ENCODE measurements at regions of chr2 and their contacts with region 1.

Region 1: DNA sequence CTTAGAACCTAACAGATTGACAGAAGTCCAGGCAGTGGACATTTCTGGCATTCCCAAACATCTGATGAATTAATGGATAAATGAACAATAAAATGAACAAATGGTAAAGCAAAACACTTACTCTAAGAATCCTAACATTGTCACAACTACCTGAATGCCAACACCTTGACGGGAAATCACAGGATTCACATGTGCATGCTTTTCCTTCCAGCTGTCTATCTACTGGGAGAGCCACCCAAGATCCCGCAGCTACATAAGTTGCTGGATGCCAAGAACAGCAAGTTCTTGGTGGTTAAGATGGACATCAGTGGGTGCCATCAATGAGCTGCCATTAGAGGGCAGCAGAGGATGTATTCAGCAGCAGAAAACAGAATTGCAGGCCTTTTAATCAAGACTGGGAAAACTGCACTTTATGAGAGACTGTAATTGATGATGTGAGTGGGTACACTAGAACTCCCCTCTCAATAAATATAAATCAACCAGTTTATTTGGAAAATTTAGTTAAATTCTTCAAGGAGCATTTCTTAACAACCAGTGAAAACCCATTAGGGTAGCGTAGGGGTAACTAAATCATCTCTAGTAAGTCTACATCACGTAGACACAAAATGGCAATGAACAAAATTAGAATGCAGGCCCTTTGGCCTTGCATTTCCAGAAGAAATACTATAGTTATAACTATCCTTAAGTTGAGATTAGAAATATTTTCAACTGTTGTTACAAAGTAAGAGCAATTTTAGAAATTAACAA is 45.6 kb downstream of the SESTD1 start:
- DNase-seq: peak; percentile 60 to 77
- ATAC-seq: peak; percentile 85 to 98 (median 88)
- H3K4me3 ChIP-seq: no peak overlapping the region
- H3K27ac ChIP-seq: no peak overlapping the region
- H3K4me1 ChIP-seq: peaks cover 10% of the 10 kb centered on the region
- H3K27me3 ChIP-seq: no peaks in the 10 kb centered on the region
- CTCF ChIP-seq: peak; percentile 92

Region 2: DNA sequence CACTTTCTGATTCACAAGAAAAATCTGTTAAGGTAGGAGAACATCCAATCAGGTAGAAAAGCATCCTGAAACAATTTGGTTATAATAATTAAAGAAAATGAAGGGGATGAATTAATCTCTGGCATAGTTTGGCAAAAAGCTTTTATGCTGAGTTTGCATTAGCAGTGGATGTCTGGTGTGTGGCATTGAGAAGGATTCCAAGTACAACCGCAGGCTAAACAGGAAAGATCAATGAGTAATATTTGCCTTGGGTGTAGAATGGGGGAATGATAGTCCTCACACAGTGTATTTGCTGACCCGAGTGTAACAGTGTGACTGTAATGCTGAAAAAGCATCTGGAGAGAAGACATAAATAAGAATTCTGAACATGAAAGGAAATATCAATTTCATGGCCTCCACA is 113.9 kb after region 1 on chr2:
- intact Hi-C with region 1: loop called in 1 of 2 experiments (anchors 5 kb)
- DNase-seq: no peak
- ATAC-seq: no peak
- H3K4me3 ChIP-seq: no peak overlapping the region
- H3K27ac ChIP-seq: no peak overlapping the region
- H3K4me1 ChIP-seq: no peaks in the 10 kb centered on the region
- H3K27me3 ChIP-seq: no peaks in the 10 kb centered on the region
- CTCF ChIP-seq: no peak

Region 3: GRCh38 chr2:179410552-179411356 is 191.7 kb after region 1 on chr2:
- intact Hi-C with region 1: loop called in 1 of 2 experiments (anchors 10 kb)
- DNase-seq: peak in 1 of 2 donors; percentile 50
- ATAC-seq: peak; percentile 47 to 79 (median 68)
- H3K4me3 ChIP-seq: no peak overlapping the region
- H3K27ac ChIP-seq: no peak overlapping the region
- H3K4me1 ChIP-seq: no peaks in the 10 kb centered on the region
- H3K27me3 ChIP-seq: no peaks in the 10 kb centered on the region
- CTCF ChIP-seq: peak; percentile 63

Region 4: DNA sequence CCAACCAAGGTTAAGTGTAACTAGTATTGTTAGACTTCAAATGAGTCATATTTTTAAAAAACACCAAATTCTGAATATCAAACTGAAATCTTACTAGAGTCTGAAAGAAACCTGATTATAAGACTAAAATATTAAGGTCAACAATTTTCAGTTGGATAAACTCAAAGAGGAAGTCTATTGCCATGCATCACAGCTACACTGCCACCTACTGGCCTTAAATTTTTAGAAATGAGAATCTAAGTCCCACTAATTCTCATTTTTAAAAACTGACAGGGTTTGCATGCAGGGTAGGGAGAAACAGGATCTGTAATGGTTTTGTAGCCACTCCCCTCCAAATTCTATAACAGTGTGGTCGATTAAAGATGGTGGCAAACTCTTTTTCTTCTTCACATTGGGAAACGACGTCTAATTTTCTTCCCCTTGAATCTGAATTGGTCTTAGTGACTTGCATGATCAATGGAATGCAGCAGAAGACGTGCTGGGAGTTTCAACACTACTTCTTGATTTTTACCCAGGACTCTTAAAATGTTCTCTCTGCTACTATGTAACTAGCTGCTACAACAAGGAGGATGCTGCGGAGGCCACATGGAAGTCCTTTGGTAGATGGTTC is 221.7 kb after region 1 on chr2:
- intact Hi-C with region 1: loop called in 1 of 2 experiments (anchors 5 kb)
- DNase-seq: no peak
- ATAC-seq: peak in 1 of 4 donors; percentile 49
- H3K4me3 ChIP-seq: no peak overlapping the region
- H3K27ac ChIP-seq: no peak overlapping the region
- H3K4me1 ChIP-seq: peaks cover 9% of the 10 kb centered on the region
- H3K27me3 ChIP-seq: no peaks in the 10 kb centered on the region
- CTCF ChIP-seq: peak; percentile 51

Region 5: DNA sequence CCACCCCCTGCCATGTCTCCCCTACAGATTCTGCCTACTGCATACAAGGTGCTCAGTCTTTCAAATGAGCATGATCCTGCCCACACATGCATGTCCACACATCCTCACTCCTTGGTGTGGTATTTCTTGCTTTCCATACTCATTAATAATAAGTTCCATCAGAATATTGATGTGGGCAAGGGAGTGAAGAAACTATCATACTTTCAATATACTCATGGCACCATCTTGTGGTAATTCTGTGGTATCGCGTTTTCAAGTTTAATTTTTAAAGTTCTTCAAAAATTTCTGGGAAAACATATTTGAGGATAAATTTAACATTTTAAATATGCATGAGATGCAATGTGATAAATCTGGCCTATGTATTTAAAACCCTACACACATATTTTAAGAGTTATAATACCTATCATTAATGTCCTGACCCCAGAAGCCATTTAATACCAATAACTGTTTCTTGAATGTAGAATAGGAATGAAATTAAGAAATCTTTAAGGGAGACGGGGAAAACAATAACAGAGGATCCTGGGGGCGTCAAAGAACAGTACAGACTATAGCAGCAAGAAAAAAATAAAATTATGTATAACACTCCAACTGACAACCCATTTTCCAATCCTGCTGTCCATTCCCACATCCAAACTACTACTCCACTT is 532.3 kb after region 1 on chr2:
- intact Hi-C with region 1: loop called (anchors 5 to 10 kb)
- DNase-seq: no peak
- ATAC-seq: peak in 3 of 4 donors; percentile 54 to 73 (median 63)
- H3K4me3 ChIP-seq: no peak overlapping the region
- H3K27ac ChIP-seq: no peak overlapping the region
- H3K4me1 ChIP-seq: no peaks in the 10 kb centered on the region
- H3K27me3 ChIP-seq: no peaks in the 10 kb centered on the region
- CTCF ChIP-seq: peak; percentile 72